Activated CD8-positive, alpha-beta memory T cell treated with anti-CD3 and anti-CD28 coated beads, Interleukin-2, amount 10 ng/mL, durations not matched to agents 7 days and 5 days (primary cell): ENCODE measurements at regions of chr2 and their contacts with region 1.

Region 1: DNA sequence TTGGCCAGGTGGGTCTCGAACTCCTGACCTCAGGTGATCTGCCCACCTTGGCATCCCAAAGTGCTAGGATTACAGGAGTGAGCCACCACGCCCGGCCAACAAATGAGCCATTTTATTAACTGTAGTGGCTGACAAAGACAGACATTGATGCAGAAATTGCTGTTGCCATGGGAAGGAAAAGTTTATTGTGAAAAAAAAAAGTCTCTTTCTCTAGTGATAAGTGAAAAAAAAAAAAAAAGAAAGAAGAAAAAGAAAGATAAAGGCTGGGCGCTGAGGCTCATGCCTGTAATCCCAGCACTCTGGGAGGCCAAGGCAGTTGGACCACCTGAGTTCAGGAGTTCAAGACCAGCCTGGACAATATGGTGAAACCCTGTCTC is 39.8 kb upstream of the RAB1A start:
- DNase-seq: no peak
- ATAC-seq: no peak
- H3K4me3 Mint-ChIP-seq: no peak overlapping the region
- H3K27ac Mint-ChIP-seq: no peak overlapping the region
- H3K4me1 Mint-ChIP-seq: no peaks in the 10 kb centered on the region
- H3K27me3 Mint-ChIP-seq: no peaks in the 10 kb centered on the region

Region 2: GRCh38 chr2:65070172-65070830 is 99.4 kb before region 1 on chr2:
- CTCF ChIA-PET with region 1: interaction called, 43 read pairs
- DNase-seq: no peak
- ATAC-seq: no peak
- H3K4me3 Mint-ChIP-seq: no peak overlapping the region
- H3K27ac Mint-ChIP-seq: no peak overlapping the region
- H3K4me1 Mint-ChIP-seq: peaks cover 23% of the 10 kb centered on the region
- H3K27me3 Mint-ChIP-seq: no peaks in the 10 kb centered on the region

Region 3: DNA sequence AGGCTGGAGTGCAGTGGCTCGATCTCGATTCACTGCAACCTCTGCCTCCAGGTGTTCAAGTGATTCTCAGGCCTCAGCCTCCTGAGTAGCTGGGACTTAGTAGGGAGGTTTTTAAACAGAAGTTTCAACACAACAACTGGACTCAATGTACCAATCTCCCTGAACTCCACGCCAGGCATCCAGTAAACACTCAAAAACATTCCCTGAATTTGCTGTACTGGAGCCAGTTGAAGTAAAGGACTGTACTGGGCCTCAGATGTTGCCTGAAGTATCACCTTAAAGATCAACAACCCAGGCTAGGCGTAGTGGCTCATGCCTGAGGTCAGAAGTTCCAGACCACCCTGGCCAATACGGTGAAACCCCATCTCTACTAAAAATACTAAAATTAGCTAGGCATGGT is 62.2 kb before region 1 on chr2:
- CTCF ChIA-PET with region 1: no interaction called
- DNase-seq: no peak
- ATAC-seq: no peak
- H3K4me3 Mint-ChIP-seq: no peak overlapping the region
- H3K27ac Mint-ChIP-seq: no peak overlapping the region
- H3K4me1 Mint-ChIP-seq: peaks cover 10% of the 10 kb centered on the region
- H3K27me3 Mint-ChIP-seq: no peaks in the 10 kb centered on the region

Region 4: DNA sequence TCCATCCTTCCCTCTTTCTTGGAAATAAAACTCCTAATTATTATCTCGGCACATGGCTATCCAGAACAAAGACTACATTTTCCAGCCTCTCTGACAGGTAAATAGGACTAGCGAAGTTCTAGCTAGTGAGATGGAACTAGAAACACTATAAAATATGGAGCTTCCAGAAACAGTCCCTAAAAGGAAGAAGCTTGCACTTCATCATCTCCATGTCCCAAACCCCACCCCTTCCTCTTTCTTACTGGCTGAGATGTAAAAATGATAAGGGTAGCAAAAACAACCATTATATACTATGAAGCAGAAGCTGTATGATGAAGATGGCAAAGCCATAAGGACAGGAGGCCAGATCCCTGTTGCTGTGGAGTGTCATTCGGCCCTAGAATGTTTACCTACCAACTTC is 46.2 kb after region 1 on chr2:
- CTCF ChIA-PET with region 1: no interaction called
- DNase-seq: no peak
- ATAC-seq: no peak
- H3K4me3 Mint-ChIP-seq: no peak overlapping the region
- H3K27ac Mint-ChIP-seq: no peak overlapping the region
- H3K4me1 Mint-ChIP-seq: peaks cover 3% of the 10 kb centered on the region
- H3K27me3 Mint-ChIP-seq: no peaks in the 10 kb centered on the region

Region 5: GRCh38 chr2:65227425-65228262 is 57.9 kb after region 1 on chr2 and contains the start of gene ACTR2:
- CTCF ChIA-PET with region 1: no interaction called
- DNase-seq: peak; percentile 97
- ATAC-seq: peak; percentile 91
- H3K4me3 Mint-ChIP-seq: peak within 1 kb of the TSS; percentile 98
- H3K27ac Mint-ChIP-seq: peak within 1 kb of the TSS; percentile 100
- H3K4me1 Mint-ChIP-seq: peaks cover 35% of the 10 kb centered on the region
- H3K27me3 Mint-ChIP-seq: no peaks in the 10 kb centered on the region
- total RNA-seq, gene ACTR2: 367 to 502 TPM